Breast epithelium (tissue), 4 donors: ENCODE measurements at regions of chr5 and their contacts with region 1.

Region 1: GRCh38 chr5:141753971-141754713 is 72.1 kb upstream of the ARAP3 start:
- DNase-seq: no peak
- H3K4me3 ChIP-seq: no peak overlapping the region
- H3K27ac ChIP-seq: no peak overlapping the region
- H3K4me1 ChIP-seq: no peaks in the 10 kb centered on the region
- H3K27me3 ChIP-seq: peaks cover 3 to 26% of the 10 kb centered on the region in 2 donors
- CTCF ChIP-seq: no peak
- POLR2A ChIP-seq: no peak

Region 2: DNA sequence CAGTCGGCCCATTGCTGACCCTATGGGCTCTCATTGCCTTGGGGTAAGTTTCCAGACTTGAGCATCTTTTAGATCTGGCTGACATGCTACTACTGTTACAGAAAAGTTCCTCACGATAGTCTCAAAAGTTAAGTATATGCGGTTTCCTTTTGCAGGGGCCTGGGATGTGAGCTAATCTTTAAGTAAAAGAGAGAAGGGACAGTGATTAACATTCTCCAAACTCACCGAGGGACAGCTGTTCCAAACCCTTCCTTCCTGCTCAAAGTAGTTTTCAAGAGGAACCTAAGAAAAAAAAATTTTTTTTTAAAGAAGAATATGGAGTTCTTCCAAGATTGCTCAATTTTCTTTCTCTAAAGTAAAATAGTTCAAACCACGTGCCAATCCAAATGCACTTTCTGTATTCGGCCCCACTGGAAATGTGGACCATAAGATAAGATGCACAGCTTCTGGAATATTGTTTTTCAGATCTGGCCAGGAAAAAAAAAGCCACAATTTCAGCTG is 738.7 kb after region 1 on chr5:
- intact Hi-C with region 1: loop called (anchors 5 kb)
- DNase-seq: no peak
- H3K4me3 ChIP-seq: peak overlapping the region in 1 of 3 donors; percentile 20
- H3K27ac ChIP-seq: no peak overlapping the region
- H3K4me1 ChIP-seq: no peaks in the 10 kb centered on the region
- H3K27me3 ChIP-seq: no peaks in the 10 kb centered on the region
- CTCF ChIP-seq: no peak
- POLR2A ChIP-seq: no peak